Posterior vena cava (tissue), 2 donors: ENCODE measurements at regions of chr4 and their contacts with region 1.

Region 1: GRCh38 chr4:171181099-171181498 is 632.1 kb upstream of the GALNTL6 start:
- DNase-seq: no peak

Region 2: GRCh38 chr4:171049380-171049779 is 131.7 kb before region 1 on chr4:
- intact Hi-C with region 1: no loop called
- DNase-seq: no peak

Region 3: GRCh38 chr4:171291791-171292190 is 110.7 kb after region 1 on chr4:
- intact Hi-C with region 1: loop called in 1 of 2 experiments (anchors 5 kb)
- DNase-seq: no peak